Ascending aorta (tissue), 2 donors: ENCODE measurements at regions of chr17 and their contacts with region 1.

Region 1: GRCh38 chr17:5486204-5487124 is at the start of gene MIS12:
- DNase-seq: peak; percentile 98 to 99
- H3K4me3 ChIP-seq: peak within 1 kb of the TSS; percentile 95 to 97
- H3K27ac ChIP-seq: peak within 1 kb of the TSS; percentile 97
- H3K4me1 ChIP-seq: peaks cover 0 to 20% of the 10 kb centered on the region in 2 donors
- H3K27me3 ChIP-seq: no peaks in the 10 kb centered on the region
- CTCF ChIP-seq: no peak
- total RNA-seq, gene MIS12: 17.5 TPM

Region 2: DNA sequence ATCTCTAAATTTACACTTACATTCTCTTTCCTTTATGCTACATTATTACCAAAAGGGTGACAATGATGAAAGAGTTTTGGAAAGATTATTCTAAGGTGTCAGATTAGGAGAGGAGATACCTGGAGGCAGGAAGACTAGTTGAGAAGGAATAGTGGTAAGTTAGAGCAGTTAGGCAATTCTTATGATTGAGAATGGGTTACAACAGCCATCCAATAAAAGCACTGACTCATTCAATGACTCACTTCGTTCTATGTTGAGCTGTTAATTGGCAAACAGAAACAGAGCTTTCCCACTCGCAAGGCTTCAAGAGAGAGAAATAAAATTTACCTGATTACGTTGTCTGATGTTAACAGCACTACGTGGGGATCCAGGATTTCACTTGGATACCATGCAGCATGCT is 72.8 kb before region 1 on chr17:
- intact Hi-C with region 1: loop called (anchors 1 kb)
- DNase-seq: no peak
- H3K4me3 ChIP-seq: peak overlapping the region in 1 of 2 donors; percentile 9
- H3K27ac ChIP-seq: peak overlapping the region; percentile 50 to 87
- H3K4me1 ChIP-seq: peaks cover 4 to 27% of the 10 kb centered on the region in 2 donors
- H3K27me3 ChIP-seq: no peaks in the 10 kb centered on the region
- CTCF ChIP-seq: no peak

Region 3: DNA sequence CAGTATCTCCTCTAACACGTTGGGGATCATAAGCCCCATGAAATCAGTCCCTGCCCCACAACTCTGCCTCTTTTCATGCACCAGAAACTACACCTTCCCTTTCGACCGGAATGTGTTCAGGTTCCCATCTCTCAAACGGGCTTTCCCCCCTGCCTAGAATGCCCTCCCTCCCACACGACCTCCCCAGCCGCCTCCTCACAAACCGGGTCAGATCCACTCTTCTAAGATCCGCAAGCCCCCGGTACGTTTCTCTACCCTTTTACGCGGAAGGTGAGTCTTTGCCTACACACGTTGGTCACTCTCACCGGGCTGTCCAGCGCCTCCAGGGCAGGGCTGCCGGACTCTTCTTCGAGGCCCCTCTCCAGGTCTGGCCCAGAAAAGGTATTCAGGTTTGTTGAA is 18.4 kb before region 1 on chr17:
- intact Hi-C with region 1: loop called (anchors 1 kb)
- DNase-seq: no peak
- H3K4me3 ChIP-seq: peak overlapping the region; percentile 59 to 85
- H3K27ac ChIP-seq: peak overlapping the region in 1 of 2 donors; percentile 71
- H3K4me1 ChIP-seq: peaks cover 2 to 9% of the 10 kb centered on the region in 2 donors
- H3K27me3 ChIP-seq: no peaks in the 10 kb centered on the region
- CTCF ChIP-seq: no peak

Region 4: DNA sequence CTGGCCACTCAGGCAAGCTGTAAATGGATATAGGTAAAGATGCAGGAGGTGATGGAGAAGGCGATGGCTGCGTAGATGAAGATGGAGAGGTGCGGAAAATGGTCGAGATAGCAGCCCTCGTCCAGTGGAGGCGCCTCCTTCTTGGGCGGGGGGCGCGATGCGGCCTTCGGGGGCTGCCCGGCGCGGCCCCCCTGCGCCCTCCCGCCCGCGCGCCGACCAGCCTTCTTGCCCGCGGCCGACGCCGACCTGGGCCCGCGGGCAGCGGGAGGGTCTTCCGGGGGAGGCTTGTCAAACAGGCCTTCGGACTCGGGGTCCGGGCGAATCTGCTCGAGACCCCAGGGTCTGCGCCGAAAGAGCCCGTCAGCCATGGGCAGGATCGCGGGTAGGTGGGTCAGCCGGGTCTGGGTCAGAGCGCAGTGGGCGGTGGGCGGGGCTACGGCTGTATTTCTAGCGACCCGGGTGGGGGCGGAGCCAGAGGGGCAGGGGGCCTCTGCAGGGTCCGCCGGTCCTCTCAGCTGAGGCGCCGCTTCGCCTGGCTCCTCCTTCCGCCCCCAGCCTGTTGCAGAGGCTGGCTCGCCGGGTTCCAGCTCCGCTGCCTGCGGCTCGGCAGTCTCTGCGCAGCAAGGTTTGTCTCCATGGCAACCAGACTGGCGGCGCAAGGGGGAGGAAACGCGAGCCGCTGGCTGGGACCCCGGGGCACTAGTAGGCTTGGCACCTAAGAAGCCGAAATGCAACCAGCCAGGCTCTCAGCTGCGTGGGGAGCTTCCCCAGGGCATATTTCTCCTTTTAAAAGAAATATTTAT is 14.3 kb after region 1 on chr17:
- intact Hi-C with region 1: no loop called
- DNase-seq: peak; percentile 31 to 87
- H3K4me3 ChIP-seq: peak overlapping the region; percentile 63 to 75
- H3K27ac ChIP-seq: peak overlapping the region; percentile 20 to 23
- H3K4me1 ChIP-seq: peaks cover 0 to 9% of the 10 kb centered on the region in 2 donors
- H3K27me3 ChIP-seq: no peaks in the 10 kb centered on the region
- CTCF ChIP-seq: no peak

Region 5: GRCh38 chr17:5526821-5527598 is 40.5 kb after region 1 on chr17:
- intact Hi-C with region 1: loop called (anchors 1 kb)
- DNase-seq: peak; percentile 76 to 93
- H3K4me3 ChIP-seq: no peak overlapping the region
- H3K27ac ChIP-seq: peak overlapping the region; percentile 94
- H3K4me1 ChIP-seq: peaks cover 5 to 15% of the 10 kb centered on the region in 2 donors
- H3K27me3 ChIP-seq: no peaks in the 10 kb centered on the region
- CTCF ChIP-seq: no peak

Region 6: DNA sequence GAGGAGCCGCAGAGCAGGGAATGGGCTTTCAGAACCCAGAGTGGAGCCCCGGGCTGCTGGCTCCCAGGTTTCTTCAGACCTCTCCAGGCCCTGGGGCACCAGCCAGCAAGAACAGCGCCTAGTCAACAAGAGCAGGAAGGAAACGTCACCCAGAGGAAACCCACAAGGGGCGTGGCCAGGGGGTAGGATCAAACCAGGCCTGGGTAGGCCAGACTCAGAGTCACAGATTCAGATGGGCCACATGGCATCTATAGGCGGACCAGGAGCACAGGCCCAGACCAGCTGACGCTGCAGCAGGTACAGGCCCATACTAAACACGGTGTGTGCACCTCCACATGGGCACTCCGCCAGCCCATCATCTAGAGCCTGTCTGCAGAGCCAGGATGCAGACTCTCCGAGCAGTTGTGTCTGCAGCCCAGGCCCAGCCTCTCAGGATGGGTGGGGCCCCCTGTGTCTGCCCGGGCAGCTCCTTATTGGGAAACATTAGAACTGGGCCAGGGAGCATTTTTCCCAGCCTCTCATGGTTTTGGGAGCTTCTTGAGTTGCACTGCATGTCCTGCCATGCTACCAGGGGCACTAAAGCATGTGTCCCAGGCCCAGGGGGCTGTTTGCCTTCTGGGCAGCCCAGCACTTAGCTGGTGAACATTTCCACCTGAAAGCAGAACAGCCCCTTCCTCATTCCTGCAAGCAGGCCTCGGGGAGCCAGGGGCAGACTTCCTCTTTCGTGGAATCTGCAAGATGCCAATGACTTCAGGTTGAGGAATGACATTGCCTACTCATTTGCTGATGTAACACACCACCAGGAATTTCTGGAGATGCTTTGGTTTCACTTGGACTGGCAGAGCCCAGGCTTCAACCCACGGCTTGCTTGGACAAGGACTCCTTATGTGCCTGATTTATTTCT is 98.2 kb after region 1 on chr17 and contains the start of gene NLRP1:
- intact Hi-C with region 1: no loop called
- DNase-seq: peak; percentile 88 to 96
- H3K4me3 ChIP-seq: peak within 1 kb of the TSS; percentile 56 to 80
- H3K27ac ChIP-seq: peak within 1 kb of the TSS; percentile 90
- H3K4me1 ChIP-seq: peaks cover 15 to 23% of the 10 kb centered on the region in 2 donors
- H3K27me3 ChIP-seq: no peaks in the 10 kb centered on the region
- CTCF ChIP-seq: no peak
- total RNA-seq, gene NLRP1: 67.7 TPM

Region 7: GRCh38 chr17:6443692-6444569 is 957.5 kb after region 1 on chr17 and contains the start of gene PIMREG:
- intact Hi-C with region 1: loop called (anchors 10 kb)
- DNase-seq: peak; percentile 75 to 95
- H3K4me3 ChIP-seq: peak within 1 kb of the TSS; percentile 55 to 73
- H3K27ac ChIP-seq: peak within 1 kb of the TSS in 1 of 2 donors; percentile 35
- H3K4me1 ChIP-seq: peaks cover 0 to 5% of the 10 kb centered on the region in 2 donors
- H3K27me3 ChIP-seq: no peaks in the 10 kb centered on the region
- CTCF ChIP-seq: no peak
- total RNA-seq, gene PIMREG: not detected

Region 8: GRCh38 chr17:6651357-6651918 is 1165.0 kb after region 1 on chr17 and contains the starts of genes C17orf100 and MED31:
- intact Hi-C with region 1: loop called (anchors 10 kb)
- DNase-seq: peak; percentile 77 to 98
- H3K4me3 ChIP-seq: peak within 1 kb of the TSS; percentile 62 to 94
- H3K27ac ChIP-seq: peak within 1 kb of the TSS; percentile 73 to 78
- H3K4me1 ChIP-seq: peaks cover 0 to 21% of the 10 kb centered on the region in 2 donors
- H3K27me3 ChIP-seq: no peaks in the 10 kb centered on the region
- CTCF ChIP-seq: peak in 1 of 3 experiments; percentile 4
- total RNA-seq, gene C17orf100: 4.3 TPM
- total RNA-seq, gene MED31: not detected